ENCODE measurements at regions of chr18 and their contacts with region 1.

Region 1: GRCh38 chr18:57803103-57803969 is at the start of gene ATP8B1:
- DNase-seq: peak; percentile 33 to 45
- ATAC-seq: peak; percentile 68 to 78
- H3K4me3 ChIP-seq: peak within 1 kb of the TSS; percentile 65 to 80 (median 72)
- H3K27ac ChIP-seq: peak within 1 kb of the TSS; percentile 66 to 85 (median 83)
- H3K4me1 ChIP-seq: peaks cover 12 to 38% of the 10 kb centered on the region in 2 donors
- H3K27me3 ChIP-seq: no peaks in the 10 kb centered on the region
- CTCF ChIP-seq: no peak
- POLR2A ChIP-seq: peak; percentile 45 to 57
- total RNA-seq, gene ATP8B1: 1.6 to 4.2 (median 2.6) TPM

Region 2: GRCh38 chr18:57710226-57710625 is 93.1 kb before region 1 on chr18:
- in situ Hi-C with region 1: no loop called
- intact Hi-C with region 1: loop called (anchors 5 kb)
- DNase-seq: no peak
- ATAC-seq: no peak
- H3K4me3 ChIP-seq: no peak overlapping the region
- H3K27ac ChIP-seq: no peak overlapping the region
- H3K4me1 ChIP-seq: peaks cover 10 to 11% of the 10 kb centered on the region in 2 donors
- H3K27me3 ChIP-seq: no peaks in the 10 kb centered on the region
- CTCF ChIP-seq: no peak
- POLR2A ChIP-seq: no peak

Measured in gastrocnemius medialis (tissue), 4 donors.